ENCODE measurements at regions of chr7 and their contacts with region 1.

Region 1: GRCh38 chr7:94012746-94013145 is 8.6 kb upstream of the BET1 start:
- DNase-seq: no peak
- ATAC-seq: no peak

Region 2: GRCh38 chr7:93873998-93874574 is 138.7 kb before region 1 on chr7:
- intact Hi-C with region 1: no loop called
- DNase-seq: no peak
- ATAC-seq: no peak

Region 3: GRCh38 chr7:94069162-94069739 is 56.5 kb after region 1 on chr7:
- intact Hi-C with region 1: no loop called
- DNase-seq: no peak
- ATAC-seq: no peak

Region 4: DNA sequence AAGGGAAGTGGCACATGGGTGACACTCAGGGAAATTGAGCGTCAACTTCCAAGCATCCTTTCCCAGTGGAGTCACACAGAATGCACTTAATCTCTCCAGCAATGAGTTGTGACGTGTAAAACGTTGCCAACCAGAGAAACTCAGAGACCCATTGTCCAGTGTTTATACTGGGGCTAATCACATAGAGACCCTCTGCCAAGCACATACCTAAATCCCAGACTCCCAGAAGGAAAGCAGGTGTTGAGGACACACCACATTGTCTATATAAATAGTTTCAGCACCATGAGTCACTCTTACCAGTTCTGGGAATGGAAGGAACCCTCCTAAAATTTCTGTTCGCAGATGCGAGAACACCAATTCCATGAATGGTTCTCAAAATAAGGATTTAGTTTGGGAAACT is 67.8 kb after region 1 on chr7:
- intact Hi-C with region 1: loop called in 1 of 2 experiments (anchors 5 kb)
- DNase-seq: no peak
- ATAC-seq: no peak

Region 5: GRCh38 chr7:94239661-94240234 is 227.0 kb after region 1 on chr7:
- intact Hi-C with region 1: no loop called
- DNase-seq: peak; percentile 54
- ATAC-seq: peak; percentile 50 to 66